ENCODE measurements at regions of chr18 and their contacts with region 1.

Region 1: GRCh38 chr18:44826418-44827259 is 146.0 kb downstream of the SETBP1 start:
- DNase-seq: no peak
- CTCF ChIP-seq: no peak

Region 2: GRCh38 chr18:44813586-44813985 is 13.1 kb before region 1 on chr18:
- CTCF ChIA-PET with region 1: interaction called, 10 read pairs
- POLR2A ChIA-PET with region 1: no interaction called
- DNase-seq: no peak
- CTCF ChIP-seq: no peak

Region 3: DNA sequence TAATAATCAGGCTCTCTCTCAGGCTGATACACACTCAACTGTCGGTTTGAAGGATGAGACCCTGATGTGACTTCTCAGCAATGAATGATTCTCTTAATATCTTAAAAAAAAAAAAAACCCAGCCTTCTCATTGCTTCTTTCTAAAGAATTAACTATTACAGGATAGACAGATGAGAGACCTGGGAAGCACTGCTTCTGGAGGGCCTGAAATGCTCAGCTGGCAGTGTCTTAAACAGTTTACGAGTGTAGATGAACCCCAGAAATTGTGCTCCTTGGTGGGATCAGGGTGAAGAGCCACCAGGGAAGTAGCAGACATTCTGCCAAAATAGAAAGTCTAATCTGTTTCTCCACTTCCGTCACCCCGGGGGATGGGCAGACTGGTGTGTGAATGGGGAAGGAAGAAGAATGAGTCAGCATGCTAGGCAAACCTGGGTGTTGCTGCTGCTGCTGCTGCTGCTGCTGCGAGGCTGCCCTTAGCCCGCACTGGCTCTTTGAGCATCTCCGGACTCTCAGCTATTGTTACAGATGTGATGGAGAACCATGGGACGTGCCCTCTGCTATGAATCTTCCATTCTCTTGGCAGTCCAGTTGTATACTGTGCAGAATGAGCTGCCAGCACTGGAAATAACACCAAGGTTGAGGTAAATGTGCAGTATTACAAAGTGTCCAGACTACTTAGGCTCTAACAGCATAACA is 12.5 kb after region 1 on chr18:
- CTCF ChIA-PET with region 1: interaction called, 21 read pairs
- POLR2A ChIA-PET with region 1: no interaction called
- DNase-seq: peak; percentile 71
- CTCF ChIP-seq: no peak